ENCODE measurements at regions of chr16 and their contacts with region 1.

Region 1: GRCh38 chr16:82639666-82640336 is 13.0 kb downstream of the CDH13 start:
- DNase-seq: peak in 1 of 2 experiments; percentile 83
- H3K4me3 ChIP-seq: no peak overlapping the region
- H3K27ac ChIP-seq: no peak overlapping the region
- H3K4me1 ChIP-seq: peaks cover 2 to 5% (median 4%) of the 10 kb centered on the region in 4 experiments; a peak in 5 of 7 replicates
- H3K27me3 ChIP-seq: no peaks in the 10 kb centered on the region
- CTCF ChIP-seq: peak; percentile 81 to 98 (median 91)
- EP300 ChIP-seq: no peak
- POLR2A ChIP-seq: no peak
- RAD21 ChIP-seq: peak; percentile 75 to 80

Region 2: GRCh38 chr16:82527101-82527500 is 112.7 kb before region 1 on chr16:
- CTCF ChIA-PET with region 1: no interaction called
- POLR2A ChIA-PET with region 1: no interaction called
- DNase-seq: no peak
- H3K4me3 ChIP-seq: no peak overlapping the region
- H3K27ac ChIP-seq: no peak overlapping the region
- H3K4me1 ChIP-seq: no peaks in the 10 kb centered on the region
- H3K27me3 ChIP-seq: peaks cover 1 to 6% (median 5%) of the 10 kb centered on the region in 4 experiments; a peak in 4 of 7 replicates
- CTCF ChIP-seq: no peak
- EP300 ChIP-seq: no peak
- POLR2A ChIP-seq: no peak
- RAD21 ChIP-seq: no peak

Region 3: GRCh38 chr16:82621796-82622195 is 18.0 kb before region 1 on chr16:
- CTCF ChIA-PET with region 1: interaction called, 21 read pairs
- POLR2A ChIA-PET with region 1: no interaction called
- DNase-seq: no peak
- H3K4me3 ChIP-seq: no peak overlapping the region
- H3K27ac ChIP-seq: no peak overlapping the region
- H3K4me1 ChIP-seq: peaks cover 0 to 2% (median 0%) of the 10 kb centered on the region in 4 experiments; a peak in 1 of 7 replicates
- H3K27me3 ChIP-seq: peaks cover 12 to 23% (median 18%) of the 10 kb centered on the region in 4 experiments
- CTCF ChIP-seq: peak in 2 of 3 experiments; percentile 13 to 22; a peak in 1 of 4 replicates
- EP300 ChIP-seq: no peak
- POLR2A ChIP-seq: no peak
- RAD21 ChIP-seq: peak; percentile 44 to 60

Region 4: DNA sequence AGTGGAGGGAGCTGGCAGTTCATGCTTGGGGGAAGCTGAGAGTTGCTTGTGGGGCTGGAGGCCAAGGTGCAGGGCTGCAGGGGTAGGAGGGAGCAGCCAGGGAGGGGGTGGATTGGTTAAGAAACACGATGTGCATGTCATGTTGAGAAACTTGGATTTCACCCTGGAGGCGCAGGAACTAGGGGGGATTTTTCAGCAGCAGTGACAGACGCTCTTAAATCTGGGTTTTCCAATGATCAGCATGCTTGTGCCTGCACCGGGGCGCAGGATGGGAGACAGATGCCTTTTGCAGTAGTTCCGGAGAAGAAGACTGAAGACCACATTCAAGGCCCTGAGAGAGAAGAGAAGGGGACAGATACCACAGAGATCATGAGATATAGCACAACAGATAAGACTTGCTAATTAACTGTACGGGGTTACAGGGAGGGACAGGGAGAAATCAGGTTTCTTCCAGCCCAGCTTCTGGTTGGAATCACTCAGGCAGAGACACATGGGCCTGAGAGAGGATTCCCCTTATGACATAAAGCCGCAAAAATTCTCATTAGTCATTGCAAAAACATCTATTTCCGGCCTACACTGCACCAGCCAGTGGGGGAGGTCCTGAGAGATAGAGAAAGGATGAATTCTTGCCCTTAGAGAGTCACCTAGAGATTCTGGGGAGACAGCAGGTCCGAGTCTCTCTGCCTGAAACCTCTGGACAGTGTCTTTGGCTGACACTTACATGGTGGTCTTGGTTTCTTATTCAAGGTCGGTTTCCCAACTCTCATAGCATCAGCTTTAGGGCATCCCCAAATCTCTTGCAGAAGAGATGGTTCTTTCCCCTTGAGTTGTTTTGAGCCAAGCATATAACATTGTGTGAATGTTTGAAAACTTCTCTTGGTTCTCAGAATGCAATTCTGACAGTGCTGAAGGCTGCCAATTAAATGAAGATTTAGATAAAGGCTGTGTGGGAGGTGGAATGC is 14.0 kb after region 1 on chr16:
- CTCF ChIA-PET with region 1: interaction called, 37 read pairs
- POLR2A ChIA-PET with region 1: interaction called, 3 read pairs
- DNase-seq: no peak
- H3K4me3 ChIP-seq: no peak overlapping the region
- H3K27ac ChIP-seq: no peak overlapping the region
- H3K4me1 ChIP-seq: no peaks in the 10 kb centered on the region; a peak in 1 of 7 replicates
- H3K27me3 ChIP-seq: no peaks in the 10 kb centered on the region
- CTCF ChIP-seq: no peak
- EP300 ChIP-seq: no peak
- POLR2A ChIP-seq: no peak
- RAD21 ChIP-seq: no peak

Region 5: DNA sequence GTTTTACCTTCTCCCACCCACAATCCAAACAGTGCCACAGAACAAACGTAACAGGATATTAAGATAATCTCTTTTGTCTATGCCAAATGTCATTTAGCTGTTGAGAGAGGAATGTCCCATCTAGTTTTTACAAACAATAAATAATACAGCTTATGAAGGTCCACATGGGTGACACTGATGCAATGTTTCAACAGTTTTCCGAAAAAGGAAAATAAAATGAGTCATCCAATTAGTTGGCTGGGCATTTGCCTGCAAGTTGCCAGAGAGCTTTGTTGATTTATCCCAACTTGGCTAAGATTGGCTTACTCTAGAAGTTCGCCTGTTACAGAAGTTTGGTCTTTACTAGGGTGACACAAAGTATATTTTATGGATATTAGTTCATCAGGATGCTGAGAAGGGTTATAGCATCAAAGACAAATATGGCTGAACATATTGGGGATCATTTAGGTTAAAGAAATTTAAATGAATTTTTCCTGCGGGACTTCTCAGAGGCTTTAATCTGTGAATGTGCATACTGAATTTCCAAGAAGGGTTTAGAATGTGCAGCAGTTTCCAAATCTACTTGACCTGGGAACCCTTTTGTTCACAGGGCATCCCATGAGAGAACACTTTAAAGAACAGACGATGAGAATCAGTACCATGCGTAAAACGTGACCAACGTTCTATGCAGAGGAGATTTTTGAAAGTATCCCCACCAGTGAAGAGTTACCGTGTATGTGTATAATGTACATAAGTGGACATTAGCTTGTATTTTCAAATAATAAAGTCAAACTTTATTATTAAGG is 60.1 kb after region 1 on chr16:
- CTCF ChIA-PET with region 1: interaction called, 10 read pairs
- POLR2A ChIA-PET with region 1: interaction called, 5 read pairs
- DNase-seq: no peak
- H3K4me3 ChIP-seq: no peak overlapping the region
- H3K27ac ChIP-seq: no peak overlapping the region
- H3K4me1 ChIP-seq: peaks cover 0 to 3% (median 0%) of the 10 kb centered on the region in 4 experiments; a peak in 1 of 7 replicates
- H3K27me3 ChIP-seq: no peaks in the 10 kb centered on the region
- CTCF ChIP-seq: no peak
- EP300 ChIP-seq: no peak
- POLR2A ChIP-seq: no peak
- RAD21 ChIP-seq: no peak

Region 6: GRCh38 chr16:82857693-82858365 is 218.0 kb after region 1 on chr16:
- CTCF ChIA-PET with region 1: no interaction called
- POLR2A ChIA-PET with region 1: no interaction called
- DNase-seq: no peak
- H3K4me3 ChIP-seq: no peak overlapping the region
- H3K27ac ChIP-seq: no peak overlapping the region
- H3K4me1 ChIP-seq: no peaks in the 10 kb centered on the region
- H3K27me3 ChIP-seq: no peaks in the 10 kb centered on the region
- CTCF ChIP-seq: no peak
- EP300 ChIP-seq: no peak
- POLR2A ChIP-seq: no peak
- RAD21 ChIP-seq: no peak